ENCODE measurements at regions of chr6 and their contacts with region 1.

Region 1: DNA sequence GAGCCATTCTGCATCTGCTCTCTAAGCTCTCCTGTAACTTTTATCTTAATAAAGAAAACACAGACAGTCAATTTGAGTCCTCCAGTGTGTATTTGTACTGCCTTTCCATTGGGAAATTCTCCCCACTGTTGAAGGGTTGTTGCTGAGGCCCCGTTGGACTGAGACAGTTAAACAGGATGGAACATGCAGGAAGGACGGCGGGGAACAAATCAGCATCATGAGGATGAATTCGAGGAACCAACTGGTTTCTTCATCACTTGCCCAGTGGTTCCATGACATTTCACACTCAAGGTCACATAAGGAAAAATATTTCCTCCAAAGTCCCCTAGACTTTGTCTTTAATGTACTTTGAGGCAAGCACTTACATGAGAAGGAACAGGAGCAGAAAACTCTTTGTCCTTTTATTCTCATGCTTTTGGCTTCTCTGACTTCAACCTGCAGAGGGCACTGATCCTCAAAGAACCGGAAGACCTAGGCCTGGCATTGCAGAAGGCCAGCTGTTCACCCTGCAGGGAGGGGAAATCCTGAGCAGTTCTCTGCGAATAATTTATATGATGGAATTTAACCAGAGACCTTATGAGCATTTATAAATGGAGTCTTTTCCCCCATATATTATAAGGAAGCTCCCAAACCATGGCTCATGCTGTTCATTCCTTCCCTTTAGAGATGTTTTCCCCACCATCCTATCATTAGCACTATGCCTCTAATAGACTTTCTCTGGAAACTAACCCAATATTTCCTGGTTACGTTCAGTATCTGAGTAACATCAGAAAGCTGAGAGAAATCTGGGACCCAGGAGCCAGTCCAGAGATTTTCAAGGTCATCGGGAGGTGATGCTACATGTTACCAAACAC is 55.2 kb upstream of the ADGRF1 start:
- DNase-seq: no peak
- H3K4me3 ChIP-seq: no peak overlapping the region
- H3K27ac ChIP-seq: no peak overlapping the region
- H3K4me1 ChIP-seq: peaks cover 6 to 16% (median 11%) of the 10 kb centered on the region in 6 donors
- H3K27me3 ChIP-seq: no peaks in the 10 kb centered on the region
- CTCF ChIP-seq: peak in 9 of 11 experiments; percentile 14 to 66 (median 56)
- POLR2A ChIP-seq: no peak

Region 2: GRCh38 chr6:47009566-47009965 is 87.8 kb before region 1 on chr6:
- intact Hi-C with region 1: no loop called
- DNase-seq: no peak
- H3K4me3 ChIP-seq: no peak overlapping the region
- H3K27ac ChIP-seq: no peak overlapping the region
- H3K4me1 ChIP-seq: no peaks in the 10 kb centered on the region
- H3K27me3 ChIP-seq: no peaks in the 10 kb centered on the region
- CTCF ChIP-seq: no peak
- POLR2A ChIP-seq: no peak

Region 3: GRCh38 chr6:47309291-47310130 is 212.2 kb after region 1 on chr6 and contains the start of gene TNFRSF21:
- intact Hi-C with region 1: loop called (anchors 10 kb)
- DNase-seq: peak; percentile 94
- H3K4me3 ChIP-seq: peak within 1 kb of the TSS; percentile 55 to 82 (median 68)
- H3K27ac ChIP-seq: peak within 1 kb of the TSS in 6 of 8 donors; percentile 53 to 79 (median 70)
- H3K4me1 ChIP-seq: peaks cover 0 to 25% (median 19%) of the 10 kb centered on the region in 6 donors
- H3K27me3 ChIP-seq: peaks cover 0 to 61% (median 12%) of the 10 kb centered on the region in 7 donors
- CTCF ChIP-seq: peak; percentile 67 to 94 (median 87)
- POLR2A ChIP-seq: peak in 1 of 3 donors; percentile 25
- total RNA-seq, gene TNFRSF21: 22.1 to 40.4 (median 30.4) TPM

Measured in spleen (tissue), 13 donors.